Upper lobe of right lung (tissue), 1 donor: ENCODE measurements at regions of chr2 and their contacts with region 1.

Region 1: DNA sequence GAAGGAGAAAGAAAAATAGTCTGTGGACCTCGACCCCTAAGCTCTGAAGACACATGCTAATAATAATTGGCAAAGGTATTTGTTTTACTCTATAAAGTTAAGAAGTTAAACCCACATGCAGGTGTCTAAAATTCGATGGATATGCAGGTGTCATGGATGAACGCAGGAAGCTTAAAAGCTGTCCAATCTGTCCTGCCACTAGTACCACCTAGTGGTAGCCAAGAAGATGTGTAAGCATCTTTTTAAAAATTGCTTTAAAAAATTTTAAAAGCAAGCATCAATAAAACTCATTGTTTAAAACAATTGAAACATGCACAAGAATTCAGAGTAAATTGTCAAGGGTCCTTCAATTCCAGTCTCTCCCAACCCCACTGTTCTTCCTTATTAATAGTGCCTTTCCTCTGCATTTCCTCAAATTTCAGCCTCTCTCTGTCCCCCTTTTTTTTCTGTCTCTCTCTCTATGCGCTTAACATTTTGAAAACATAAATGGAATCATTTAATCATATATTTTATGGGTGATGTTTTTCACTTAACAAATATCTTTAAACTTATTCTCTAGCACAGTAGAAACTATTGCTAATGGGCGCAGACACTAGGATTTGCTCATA is 30.6 kb upstream of the PPP3R1 start:
- DNase-seq: no peak
- ATAC-seq: peak; percentile 75
- H3K4me3 ChIP-seq: no peak overlapping the region
- H3K27ac ChIP-seq: no peak overlapping the region
- H3K4me1 ChIP-seq: peaks cover 9% of the 10 kb centered on the region
- H3K27me3 ChIP-seq: no peaks in the 10 kb centered on the region
- CTCF ChIP-seq: peak; percentile 73

Region 2: GRCh38 chr2:68031542-68032160 is 251.3 kb before region 1 on chr2:
- intact Hi-C with region 1: no loop called
- DNase-seq: no peak
- ATAC-seq: peak; percentile 66
- H3K4me3 ChIP-seq: no peak overlapping the region
- H3K27ac ChIP-seq: no peak overlapping the region
- H3K4me1 ChIP-seq: no peaks in the 10 kb centered on the region
- H3K27me3 ChIP-seq: no peaks in the 10 kb centered on the region
- CTCF ChIP-seq: peak; percentile 72

Region 3: GRCh38 chr2:68121873-68122679 is 160.8 kb before region 1 on chr2:
- intact Hi-C with region 1: loop called (anchors 5 kb)
- DNase-seq: peak; percentile 89
- ATAC-seq: peak; percentile 95
- H3K4me3 ChIP-seq: no peak overlapping the region
- H3K27ac ChIP-seq: no peak overlapping the region
- H3K4me1 ChIP-seq: no peaks in the 10 kb centered on the region
- H3K27me3 ChIP-seq: no peaks in the 10 kb centered on the region
- CTCF ChIP-seq: peak; percentile 98